Brain microvascular endothelial cell (primary cell): ENCODE measurements at regions of chr17 and their contacts with region 1.

Region 1: DNA sequence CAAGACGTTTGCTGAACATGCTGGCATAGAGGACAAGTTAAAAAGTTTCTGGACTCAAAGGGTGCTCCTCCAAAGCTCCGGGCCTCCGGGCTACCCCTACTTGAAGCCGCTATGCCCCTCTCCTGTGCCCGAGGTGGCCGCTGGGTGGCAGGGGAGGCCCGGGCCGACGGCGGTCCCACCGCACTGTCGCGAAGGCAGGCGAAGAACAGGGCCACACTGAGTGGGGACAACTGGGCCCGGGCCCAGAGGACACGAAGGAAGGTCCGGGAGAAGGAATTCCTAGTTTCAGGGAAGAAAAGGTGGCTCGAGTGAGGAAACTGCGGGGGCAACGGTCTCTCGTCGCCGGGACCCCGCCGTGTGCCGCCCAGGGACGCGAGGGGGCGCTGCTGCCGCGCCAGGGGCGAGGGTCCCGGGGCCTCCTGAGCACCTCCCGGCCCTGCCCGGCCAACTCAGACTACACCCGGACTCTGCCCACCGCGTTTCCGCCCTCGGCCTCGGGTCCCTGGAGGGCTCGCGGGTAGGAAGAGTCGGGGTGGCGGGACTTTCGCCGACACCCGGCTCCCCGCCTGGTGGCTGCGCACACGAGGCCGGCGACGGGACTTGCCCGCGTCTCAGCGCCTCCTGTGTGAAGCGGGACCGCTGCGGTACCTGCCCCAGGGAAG is 885 bp upstream of the CHCT1 start:
- DNase-seq: peak; percentile 25
- H3K4me3 ChIP-seq: peak overlapping the region; percentile 56
- H3K27ac ChIP-seq: no peak overlapping the region
- H3K27me3 ChIP-seq: no peaks in the 10 kb centered on the region
- CTCF ChIP-seq: peak; percentile 95

Region 2: GRCh38 chr17:60231234-60231633 is 190.2 kb before region 1 on chr17:
- in situ Hi-C with region 1: loop called (anchors 25 kb)
- DNase-seq: peak; percentile 32
- H3K4me3 ChIP-seq: no peak overlapping the region
- H3K27ac ChIP-seq: no peak overlapping the region
- H3K27me3 ChIP-seq: no peaks in the 10 kb centered on the region
- CTCF ChIP-seq: peak; percentile 61